ENCODE measurements at regions of chr6 and their contacts with region 1.

Region 1: GRCh38 chr6:83067448-83068413 is at the start of gene DOP1A:
- DNase-seq: peak; percentile 95
- H3K4me3 Mint-ChIP-seq: peak within 1 kb of the TSS; percentile 88
- H3K27ac Mint-ChIP-seq: peak within 1 kb of the TSS; percentile 71
- H3K4me1 Mint-ChIP-seq: peaks cover 43% of the 10 kb centered on the region
- H3K27me3 Mint-ChIP-seq: no peaks in the 10 kb centered on the region
- total RNA-seq, gene DOP1A: 12.5 to 13.3 TPM

Region 2: DNA sequence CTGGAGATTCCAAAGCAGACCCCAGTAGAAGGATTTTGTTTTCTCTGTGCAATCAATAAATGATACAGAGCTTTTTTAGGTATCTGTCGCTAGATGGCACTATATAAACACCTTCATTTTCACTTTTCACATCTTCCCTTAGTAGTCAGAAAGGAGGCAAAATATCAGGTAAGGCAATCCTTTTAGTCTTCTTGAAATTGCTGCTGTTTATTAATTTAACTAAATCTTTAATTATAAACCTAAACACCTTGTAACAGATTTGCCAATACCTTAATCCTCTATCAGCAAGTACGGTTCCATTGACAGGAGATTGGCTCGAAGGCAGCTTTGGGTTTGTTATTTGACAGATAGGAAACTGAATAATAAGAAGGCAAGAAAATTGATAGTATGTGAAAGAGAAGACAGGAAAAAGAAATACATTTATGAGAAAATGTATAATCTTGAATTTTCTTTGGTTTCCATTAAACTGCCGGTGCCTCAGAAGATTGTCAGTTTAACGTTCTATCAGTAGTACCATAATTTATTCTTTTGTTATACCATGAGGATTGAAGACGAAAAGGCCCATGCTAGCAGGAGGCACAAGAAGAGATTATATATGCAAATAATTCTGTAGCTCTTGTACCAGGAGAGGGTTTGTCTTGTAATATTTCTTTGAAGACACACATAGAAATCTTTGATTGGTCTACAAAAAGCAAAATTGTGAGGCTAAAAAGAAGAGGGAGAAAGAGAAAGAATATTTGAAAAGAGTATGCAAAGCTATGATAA is 796.7 kb before region 1 on chr6:
- CTCF ChIA-PET with region 1: interaction called, 40 read pairs
- POLR2A ChIA-PET with region 1: no interaction called
- DNase-seq: no peak
- H3K4me3 Mint-ChIP-seq: no peak overlapping the region
- H3K27ac Mint-ChIP-seq: no peak overlapping the region
- H3K4me1 Mint-ChIP-seq: no peaks in the 10 kb centered on the region
- H3K27me3 Mint-ChIP-seq: peaks cover 3% of the 10 kb centered on the region

Region 3: GRCh38 chr6:82980086-82980485 is 87.6 kb before region 1 on chr6:
- CTCF ChIA-PET with region 1: no interaction called
- POLR2A ChIA-PET with region 1: no interaction called
- DNase-seq: no peak
- H3K4me3 Mint-ChIP-seq: no peak overlapping the region
- H3K27ac Mint-ChIP-seq: no peak overlapping the region
- H3K4me1 Mint-ChIP-seq: no peaks in the 10 kb centered on the region
- H3K27me3 Mint-ChIP-seq: no peaks in the 10 kb centered on the region

Region 4: GRCh38 chr6:83008663-83009062 is 59.1 kb before region 1 on chr6:
- CTCF ChIA-PET with region 1: no interaction called
- POLR2A ChIA-PET with region 1: no interaction called
- DNase-seq: no peak
- H3K4me3 Mint-ChIP-seq: no peak overlapping the region
- H3K27ac Mint-ChIP-seq: no peak overlapping the region
- H3K4me1 Mint-ChIP-seq: peaks cover 5% of the 10 kb centered on the region
- H3K27me3 Mint-ChIP-seq: no peaks in the 10 kb centered on the region

Region 5: GRCh38 chr6:83119742-83120300 is 52.1 kb after region 1 on chr6:
- CTCF ChIA-PET with region 1: interaction called, 19 read pairs
- POLR2A ChIA-PET with region 1: no interaction called
- DNase-seq: no peak
- H3K4me3 Mint-ChIP-seq: no peak overlapping the region
- H3K27ac Mint-ChIP-seq: no peak overlapping the region
- H3K4me1 Mint-ChIP-seq: no peaks in the 10 kb centered on the region
- H3K27me3 Mint-ChIP-seq: no peaks in the 10 kb centered on the region

Region 6: DNA sequence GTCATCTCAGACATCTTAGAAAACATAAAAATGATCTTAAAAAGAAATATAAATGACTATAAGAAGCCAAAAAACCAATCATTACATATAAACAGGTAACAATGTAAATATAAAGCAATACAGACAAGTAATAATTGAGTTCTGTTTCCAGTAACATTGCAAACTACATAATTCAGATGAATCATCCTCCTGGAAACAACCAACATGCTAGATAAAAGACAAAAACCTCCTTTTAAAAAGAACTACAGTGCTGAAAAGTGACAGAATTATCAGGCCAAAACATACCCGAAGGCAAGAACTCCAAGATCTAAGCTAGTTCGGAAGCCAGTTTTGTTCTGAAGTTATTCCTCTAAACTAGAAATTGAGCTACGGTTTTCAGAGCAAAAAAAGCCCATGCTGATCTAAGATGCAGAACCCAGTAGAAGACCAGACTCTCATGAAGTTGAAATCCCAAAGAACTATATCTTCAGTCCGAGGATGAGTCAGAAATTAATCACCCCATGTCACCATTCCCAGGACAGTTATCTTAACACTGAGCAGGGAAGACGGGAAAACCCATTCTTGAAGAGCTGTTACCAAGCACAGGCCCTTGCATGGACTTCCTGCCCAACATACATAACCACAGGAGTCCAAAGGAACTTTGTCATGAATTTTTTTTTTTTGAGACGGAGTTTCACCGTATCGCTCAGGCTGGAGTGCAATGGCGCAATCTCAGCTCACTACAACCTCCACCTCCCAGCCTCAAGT is 115.5 kb after region 1 on chr6:
- CTCF ChIA-PET with region 1: interaction called, 28 read pairs
- POLR2A ChIA-PET with region 1: interaction called, 3 read pairs
- DNase-seq: no peak
- H3K4me3 Mint-ChIP-seq: no peak overlapping the region
- H3K27ac Mint-ChIP-seq: no peak overlapping the region
- H3K4me1 Mint-ChIP-seq: peaks cover 2% of the 10 kb centered on the region
- H3K27me3 Mint-ChIP-seq: no peaks in the 10 kb centered on the region

Region 7: DNA sequence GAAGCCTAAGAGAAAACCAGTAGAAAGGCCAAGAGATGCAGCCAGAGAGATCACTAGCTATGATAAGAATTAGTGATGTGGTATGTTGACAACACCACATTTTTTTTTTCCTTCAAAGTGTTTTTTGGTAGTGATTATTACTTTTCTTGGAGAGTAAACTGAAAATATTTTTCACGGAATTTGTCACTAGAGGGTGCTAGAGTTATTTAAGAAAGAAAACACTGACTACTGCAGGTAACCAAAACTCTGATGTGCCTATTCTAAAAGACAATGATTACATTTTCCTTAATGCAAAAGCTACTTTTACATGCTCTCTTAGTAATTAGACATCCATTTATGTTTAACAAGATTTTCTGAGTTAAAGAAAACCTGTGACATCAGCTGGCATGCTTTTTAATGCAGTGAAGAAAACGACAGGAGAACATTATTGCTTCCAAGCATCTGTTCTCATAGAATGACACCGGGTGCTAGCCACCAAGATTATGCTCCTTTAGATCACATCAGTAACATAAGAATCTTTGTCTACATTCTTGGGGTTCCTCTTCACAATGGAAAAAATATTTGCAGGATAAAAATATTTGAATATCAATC is 154.3 kb after region 1 on chr6:
- CTCF ChIA-PET with region 1: interaction called, 228 read pairs
- POLR2A ChIA-PET with region 1: interaction called, 4 read pairs
- DNase-seq: no peak
- H3K4me3 Mint-ChIP-seq: no peak overlapping the region
- H3K27ac Mint-ChIP-seq: no peak overlapping the region
- H3K4me1 Mint-ChIP-seq: no peaks in the 10 kb centered on the region
- H3K27me3 Mint-ChIP-seq: no peaks in the 10 kb centered on the region